ENCODE measurements at regions of chr2 and their contacts with region 1.

Region 1: GRCh38 chr2:96145036-96145847 is at the start of gene DUSP2:
- DNase-seq: peak; percentile 95
- CTCF ChIP-seq: no peak

Region 2: GRCh38 chr2:96157651-96158553 is 12.7 kb after region 1 on chr2:
- CTCF ChIA-PET with region 1: interaction called, 658 read pairs
- POLR2A ChIA-PET with region 1: interaction called, 43 read pairs
- DNase-seq: peak; percentile 87
- CTCF ChIP-seq: no peak

Region 3: DNA sequence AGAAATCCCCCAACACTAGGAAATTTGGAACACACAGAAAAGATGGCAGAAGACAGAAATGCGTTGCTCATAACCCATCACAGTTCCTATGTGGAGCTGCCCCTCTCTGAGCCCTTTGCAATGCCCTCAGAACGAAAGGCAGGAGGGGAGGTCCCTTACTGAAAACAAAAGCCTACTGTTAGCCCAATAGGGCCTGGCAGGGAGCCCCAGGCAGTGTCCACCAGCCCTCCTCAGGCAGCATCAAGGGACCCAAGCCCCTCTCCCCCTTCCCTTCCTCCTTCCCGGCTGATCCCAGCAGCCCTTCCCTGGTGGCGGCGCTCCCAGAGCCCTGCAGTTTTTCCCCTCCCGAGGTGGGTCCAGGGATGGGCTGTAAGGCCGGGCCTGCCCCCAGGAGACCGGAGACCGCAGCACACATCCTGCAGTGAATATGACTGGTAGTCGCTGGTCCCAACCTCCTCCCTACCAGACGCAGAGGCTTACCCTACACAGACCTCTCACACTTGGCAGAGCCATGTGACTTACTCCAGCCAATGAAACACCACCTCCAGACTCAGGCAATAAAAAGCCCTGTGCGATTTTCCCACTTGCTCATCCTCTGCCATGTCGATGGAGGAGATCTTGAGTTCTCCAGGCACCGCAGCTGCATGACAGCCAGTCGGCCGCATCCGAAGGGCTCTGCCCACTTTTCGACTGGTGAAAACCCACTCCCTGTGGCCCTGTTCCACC is 19.4 kb after region 1 on chr2:
- CTCF ChIA-PET with region 1: interaction called, 658 read pairs
- POLR2A ChIA-PET with region 1: interaction called, 43 read pairs
- DNase-seq: peak; percentile 87
- CTCF ChIP-seq: no peak

Region 4: GRCh38 chr2:97011977-97012565 is 866.8 kb after region 1 on chr2:
- CTCF ChIA-PET with region 1: no interaction called
- POLR2A ChIA-PET with region 1: no interaction called
- DNase-seq: peak; percentile 26
- CTCF ChIP-seq: peak; percentile 49